ENCODE measurements at regions of chr11 and their contacts with region 1.

Region 1: DNA sequence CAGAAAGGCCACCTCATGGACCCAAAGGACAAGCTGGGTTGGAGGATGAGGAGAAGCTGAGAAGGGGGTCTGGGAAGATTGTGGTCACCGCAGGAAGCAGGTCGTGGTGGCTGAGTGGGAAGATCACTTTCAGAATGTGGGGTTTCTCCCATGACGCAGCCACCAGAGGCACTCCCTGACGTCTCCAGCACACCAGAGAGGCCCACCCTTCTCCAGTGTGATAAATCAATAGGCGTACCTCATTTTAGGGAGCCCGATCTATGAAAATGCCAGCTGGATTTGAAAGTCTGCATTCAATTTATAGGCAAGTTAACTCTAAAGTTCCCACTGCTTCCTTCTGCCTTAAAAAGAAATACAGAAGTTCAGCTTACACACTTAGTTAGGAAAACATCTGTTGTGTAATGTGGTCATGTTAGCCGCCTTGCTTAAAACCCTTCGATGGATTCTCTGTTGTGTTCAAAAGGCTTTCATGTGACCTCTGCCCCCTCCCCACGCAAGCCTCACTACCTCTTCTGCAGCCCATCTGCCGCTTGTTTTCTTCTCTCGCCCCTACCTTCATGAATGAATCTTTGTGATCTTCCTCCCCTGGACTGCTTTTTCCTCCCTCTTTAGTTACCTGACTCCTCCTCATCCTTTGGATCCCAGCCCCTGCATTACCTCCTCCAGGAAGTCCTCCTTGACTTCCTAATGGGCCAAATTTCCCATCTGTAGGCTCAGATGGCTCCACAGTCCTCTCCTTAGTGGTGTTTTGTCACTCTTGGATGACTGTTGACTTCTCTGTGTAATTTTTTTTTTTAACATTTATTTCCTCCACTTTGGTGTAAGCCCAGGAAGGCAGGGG is 10.7 kb downstream of the TSPAN18 start:
- DNase-seq: no peak
- H3K4me3 ChIP-seq: no peak overlapping the region
- H3K27ac ChIP-seq: no peak overlapping the region
- H3K4me1 ChIP-seq: peaks cover 1% of the 10 kb centered on the region
- H3K27me3 ChIP-seq: no peaks in the 10 kb centered on the region
- CTCF ChIP-seq: no peak

Region 2: GRCh38 chr11:44684859-44685281 is 52.6 kb before region 1 on chr11:
- CTCF ChIA-PET with region 1: no interaction called
- POLR2A ChIA-PET with region 1: no interaction called
- intact Hi-C with region 1: loop called (anchors 2 kb)
- DNase-seq: no peak
- H3K4me3 ChIP-seq: no peak overlapping the region
- H3K27ac ChIP-seq: no peak overlapping the region
- H3K4me1 ChIP-seq: no peaks in the 10 kb centered on the region
- H3K27me3 ChIP-seq: peaks cover 17% of the 10 kb centered on the region
- CTCF ChIP-seq: no peak

Region 3: GRCh38 chr11:45048870-45049691 is 311.6 kb after region 1 on chr11:
- CTCF ChIA-PET with region 1: no interaction called
- POLR2A ChIA-PET with region 1: no interaction called
- intact Hi-C with region 1: no loop called
- DNase-seq: no peak
- H3K4me3 ChIP-seq: no peak overlapping the region
- H3K27ac ChIP-seq: no peak overlapping the region
- H3K4me1 ChIP-seq: no peaks in the 10 kb centered on the region
- H3K27me3 ChIP-seq: no peaks in the 10 kb centered on the region
- CTCF ChIP-seq: no peak

Measured in A673 (cell line).